Ovary (tissue), 10 donors: ENCODE measurements at regions of chr15 and their contacts with region 1.

Region 1: DNA sequence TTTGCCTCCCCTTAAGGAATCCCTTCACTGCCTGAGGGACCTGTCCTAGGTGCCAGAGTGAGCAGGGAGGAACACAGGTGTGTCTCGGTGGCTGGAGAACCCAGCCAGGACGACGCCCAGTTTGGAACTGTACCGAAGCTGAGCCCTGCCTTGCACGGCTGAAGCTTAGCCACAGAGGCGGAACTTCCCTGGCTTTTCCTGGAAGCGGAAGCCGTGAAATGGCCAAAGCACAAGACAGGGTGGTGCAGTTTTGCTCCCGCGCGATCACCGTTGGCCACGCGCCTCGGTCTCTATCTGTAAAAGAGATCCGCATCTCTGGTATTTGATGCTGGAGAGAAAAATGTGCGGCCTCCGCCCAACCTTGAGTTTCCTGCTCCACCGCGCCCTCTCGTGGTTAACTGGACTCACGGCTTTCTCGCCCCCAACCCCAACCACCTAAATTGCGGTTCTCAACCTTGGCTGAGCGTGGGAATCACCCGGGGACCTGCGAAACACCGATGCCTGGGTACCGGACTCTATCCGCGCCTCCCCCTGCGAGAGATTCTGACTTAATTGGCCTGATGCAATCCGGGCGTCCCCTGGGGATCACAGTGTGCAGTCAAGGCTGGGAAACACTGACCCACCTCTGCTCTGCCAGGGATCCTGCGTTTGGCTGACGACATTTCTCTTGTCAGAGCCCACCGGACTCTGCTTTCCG is 70.7 kb upstream of the ABHD2 start:
- DNase-seq: peak; percentile 67 to 86 (median 81)
- H3K4me3 ChIP-seq: peak overlapping the region; percentile 25
- H3K27ac ChIP-seq: peak overlapping the region in 1 of 2 donors; percentile 3
- H3K4me1 ChIP-seq: peaks cover 7% of the 10 kb centered on the region
- H3K27me3 ChIP-seq: no peaks in the 10 kb centered on the region
- CTCF ChIP-seq: peak; percentile 67 to 69 (median 68)
- EP300 ChIP-seq: peak; percentile 81
- POLR2A ChIP-seq: no peak

Region 2: DNA sequence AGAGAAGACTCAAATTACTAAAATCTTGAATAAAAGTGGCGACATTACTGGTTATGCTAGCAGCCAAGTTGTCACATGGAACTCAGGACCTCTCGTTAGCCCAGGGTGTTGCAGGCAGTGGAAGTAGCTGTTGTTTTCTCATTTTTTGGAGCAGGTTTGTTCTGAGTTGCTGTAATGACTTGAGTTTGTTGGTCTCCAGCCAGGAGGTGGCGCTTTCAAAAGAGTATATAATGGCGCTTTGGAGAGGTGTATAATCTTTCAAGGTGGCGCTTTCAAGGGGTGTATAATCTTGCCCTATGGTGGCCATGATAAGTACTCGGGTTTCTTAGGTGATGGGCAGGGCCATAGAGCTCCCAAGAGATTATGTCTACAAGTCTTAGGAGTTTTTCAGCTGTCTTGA is 1393.7 kb before region 1 on chr15:
- intact Hi-C with region 1: no loop called
- DNase-seq: no peak
- H3K4me3 ChIP-seq: no peak overlapping the region
- H3K27ac ChIP-seq: no peak overlapping the region
- H3K4me1 ChIP-seq: no peaks in the 10 kb centered on the region
- H3K27me3 ChIP-seq: no peaks in the 10 kb centered on the region
- CTCF ChIP-seq: no peak
- EP300 ChIP-seq: no peak
- POLR2A ChIP-seq: no peak

Region 3: DNA sequence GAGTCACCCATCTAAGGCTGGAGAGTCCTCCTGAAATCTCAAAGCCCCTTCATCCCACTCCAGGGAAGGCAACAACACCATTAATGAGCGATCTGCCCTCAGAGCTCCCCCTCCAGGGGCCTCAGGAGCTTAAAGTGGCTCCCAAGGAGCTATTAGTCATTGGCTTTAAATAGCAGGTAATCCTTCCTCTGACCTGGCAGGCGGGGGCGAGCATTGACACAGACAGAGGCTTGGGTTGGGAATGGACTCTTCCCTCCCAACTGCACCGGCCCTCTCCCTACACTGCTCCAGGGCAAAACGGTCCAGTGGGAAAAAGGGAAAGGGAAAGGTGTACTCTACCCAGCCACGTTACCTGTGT is 105.8 kb before region 1 on chr15:
- intact Hi-C with region 1: loop called in 3 of 4 experiments (anchors 2 to 10 kb)
- DNase-seq: no peak
- H3K4me3 ChIP-seq: peak overlapping the region; percentile 58
- H3K27ac ChIP-seq: peak overlapping the region; percentile 77 to 80
- H3K4me1 ChIP-seq: peaks cover 11% of the 10 kb centered on the region
- H3K27me3 ChIP-seq: no peaks in the 10 kb centered on the region
- CTCF ChIP-seq: no peak
- EP300 ChIP-seq: no peak
- POLR2A ChIP-seq: no peak